ENCODE measurements at regions of chr13 and their contacts with region 1.

Region 1: DNA sequence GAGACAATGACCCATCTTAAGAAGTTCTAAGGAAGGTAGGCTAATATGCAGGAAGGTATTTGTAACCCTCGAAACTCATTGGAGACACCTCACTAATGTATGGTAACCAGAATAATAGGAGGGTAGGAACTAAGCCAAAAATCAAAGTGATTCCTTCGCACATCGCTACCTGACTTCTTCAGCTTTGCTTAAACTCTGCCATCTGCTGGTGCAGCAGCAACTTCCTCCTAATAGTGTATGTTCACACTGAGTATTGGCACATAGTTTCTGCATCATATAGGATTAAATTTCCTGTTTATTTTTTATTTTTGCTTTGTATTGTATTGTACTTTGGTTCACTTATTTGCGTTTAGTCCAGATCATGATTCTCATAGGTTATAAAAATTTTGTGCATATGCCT is 676.2 kb downstream of the GPC5 start:
- DNase-seq: no peak
- H3K4me3 ChIP-seq: no peak overlapping the region
- H3K27ac ChIP-seq: no peak overlapping the region
- H3K27me3 ChIP-seq: no peaks in the 10 kb centered on the region
- CTCF ChIP-seq: peak in 47 of 56 donors; percentile 13 to 65 (median 40)

Region 2: GRCh38 chr13:91817250-91817649 is 257.4 kb before region 1 on chr13:
- intact Hi-C with region 1: loop called in 1 of 2 experiments (anchors 10 kb)
- DNase-seq: no peak
- H3K4me3 ChIP-seq: no peak overlapping the region
- H3K27ac ChIP-seq: no peak overlapping the region
- H3K27me3 ChIP-seq: peaks cover 0 to 3% (median 0%) of the 10 kb centered on the region in 45 donors
- CTCF ChIP-seq: peak in 53 of 56 donors; percentile 26 to 70 (median 50)

Region 3: GRCh38 chr13:91946498-91947070 is 128.1 kb before region 1 on chr13:
- intact Hi-C with region 1: loop called in 1 of 2 experiments (anchors 5 kb)
- DNase-seq: peak in 2 of 10 donors; percentile 3 to 14
- H3K4me3 ChIP-seq: peak overlapping the region in 24 of 59 donors; percentile 2 to 45 (median 21)
- H3K27ac ChIP-seq: no peak overlapping the region
- H3K27me3 ChIP-seq: no peaks in the 10 kb centered on the region
- CTCF ChIP-seq: peak; percentile 33 to 77 (median 60)

Measured in dorsolateral prefrontal cortex (tissue), 120 donors.